ENCODE measurements at regions of chr5 and their contacts with region 1.

Region 1: GRCh38 chr5:57173185-57174127 is at the start of gene GPBP1:
- DNase-seq: peak; percentile 98 to 99
- H3K4me3 ChIP-seq: peak within 1 kb of the TSS; percentile 98
- H3K4me3 Mint-ChIP-seq: peak within 1 kb of the TSS; percentile 97
- H3K27ac Mint-ChIP-seq: peak within 1 kb of the TSS; percentile 99
- H3K4me1 ChIP-seq: peaks cover 8% of the 10 kb centered on the region; the same call in 1 of the 2 replicates
- H3K4me1 Mint-ChIP-seq: no peaks in the 10 kb centered on the region
- H3K27me3 ChIP-seq: no peaks in the 10 kb centered on the region
- H3K27me3 Mint-ChIP-seq: no peaks in the 10 kb centered on the region
- CTCF ChIP-seq: no peak
- total RNA-seq, gene GPBP1: 100 and 117 TPM in 2 replicates

Region 2: DNA sequence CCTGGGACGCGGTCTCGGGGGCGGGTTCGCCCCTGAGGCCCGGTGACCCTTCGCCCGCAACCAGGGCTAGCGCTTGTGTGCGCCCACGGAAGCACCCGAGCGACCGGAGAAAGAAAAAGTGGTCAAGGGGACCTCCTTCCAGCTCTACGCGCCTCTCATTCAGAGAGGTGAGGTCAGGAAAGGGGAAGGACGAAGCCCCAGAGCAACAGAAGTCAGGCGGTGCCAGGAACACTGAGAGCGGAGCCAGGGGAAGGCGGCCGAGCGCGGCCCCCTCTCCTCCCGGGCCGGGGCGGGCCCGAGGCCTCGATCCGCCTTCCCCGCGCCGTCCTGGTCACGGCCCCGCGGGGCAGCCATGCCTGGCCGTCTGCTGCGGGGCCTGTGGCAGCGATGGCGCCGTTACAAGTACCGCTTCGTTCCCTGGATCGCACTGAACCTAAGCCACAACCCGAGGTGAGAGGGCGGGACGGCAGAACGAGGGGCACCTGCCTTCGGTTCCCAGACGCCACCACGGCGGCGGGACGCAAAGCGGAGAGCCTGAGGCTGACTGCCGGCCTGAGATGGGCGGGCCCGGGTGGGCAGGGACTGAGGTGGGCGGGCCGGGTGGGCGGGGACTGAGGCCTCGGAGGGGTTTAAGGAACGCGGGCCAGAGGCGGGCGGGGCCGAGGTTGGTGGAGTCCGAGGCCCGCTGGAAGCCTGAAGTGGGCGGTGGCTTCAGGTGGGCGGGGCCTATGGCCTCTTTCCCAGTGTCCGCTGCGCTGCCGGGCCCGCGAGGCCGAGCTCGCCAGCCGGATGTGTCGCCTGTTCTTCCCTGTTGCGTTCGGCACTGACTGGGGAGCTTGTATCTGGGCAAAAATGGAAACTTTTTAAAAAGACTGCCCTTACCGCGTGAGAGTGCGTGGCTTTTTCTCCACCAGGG is 263.9 kb before region 1 on chr5 and contains the start of gene SETD9:
- CTCF ChIA-PET with region 1: no interaction called
- POLR2A ChIA-PET with region 1: interaction called, 22 read pairs
- intact Hi-C with region 1: loop called (anchors 1 kb)
- DNase-seq: peak; percentile 97 to 99
- H3K4me3 ChIP-seq: peak within 1 kb of the TSS; percentile 85
- H3K4me3 Mint-ChIP-seq: peak within 1 kb of the TSS; percentile 96
- H3K27ac Mint-ChIP-seq: peak within 1 kb of the TSS; percentile 94
- H3K4me1 ChIP-seq: no peaks in the 10 kb centered on the region
- H3K4me1 Mint-ChIP-seq: no peaks in the 10 kb centered on the region
- H3K27me3 ChIP-seq: no peaks in the 10 kb centered on the region
- H3K27me3 Mint-ChIP-seq: no peaks in the 10 kb centered on the region
- CTCF ChIP-seq: no peak
- total RNA-seq, gene SETD9: 10.5 and 13.1 TPM in 2 replicates

Region 3: DNA sequence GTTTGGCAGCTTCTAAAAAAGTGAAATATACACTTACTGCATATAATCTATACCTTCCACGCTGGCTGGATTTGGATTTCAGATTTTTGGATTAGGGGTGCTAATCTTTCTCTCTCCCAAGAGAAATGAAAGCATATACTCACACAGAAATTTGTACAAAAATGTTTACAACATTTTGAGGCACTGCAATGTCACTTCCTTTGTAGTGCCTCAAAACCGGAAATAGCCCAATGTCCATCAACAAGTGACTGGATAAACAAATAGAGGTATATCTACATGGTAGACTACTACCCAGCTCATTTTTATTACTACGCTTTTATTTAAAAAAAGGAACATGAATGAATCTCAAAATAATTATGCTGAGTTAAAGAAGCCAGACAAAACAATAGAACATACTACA is 147.5 kb before region 1 on chr5:
- CTCF ChIA-PET with region 1: no interaction called
- POLR2A ChIA-PET with region 1: no interaction called
- intact Hi-C with region 1: no loop called
- DNase-seq: no peak
- H3K4me3 ChIP-seq: no peak overlapping the region
- H3K4me3 Mint-ChIP-seq: no peak overlapping the region
- H3K27ac Mint-ChIP-seq: no peak overlapping the region
- H3K4me1 ChIP-seq: no peaks in the 10 kb centered on the region; the same call in 1 of the 2 replicates
- H3K4me1 Mint-ChIP-seq: no peaks in the 10 kb centered on the region
- H3K27me3 ChIP-seq: no peaks in the 10 kb centered on the region
- H3K27me3 Mint-ChIP-seq: no peaks in the 10 kb centered on the region
- CTCF ChIP-seq: no peak

Region 4: DNA sequence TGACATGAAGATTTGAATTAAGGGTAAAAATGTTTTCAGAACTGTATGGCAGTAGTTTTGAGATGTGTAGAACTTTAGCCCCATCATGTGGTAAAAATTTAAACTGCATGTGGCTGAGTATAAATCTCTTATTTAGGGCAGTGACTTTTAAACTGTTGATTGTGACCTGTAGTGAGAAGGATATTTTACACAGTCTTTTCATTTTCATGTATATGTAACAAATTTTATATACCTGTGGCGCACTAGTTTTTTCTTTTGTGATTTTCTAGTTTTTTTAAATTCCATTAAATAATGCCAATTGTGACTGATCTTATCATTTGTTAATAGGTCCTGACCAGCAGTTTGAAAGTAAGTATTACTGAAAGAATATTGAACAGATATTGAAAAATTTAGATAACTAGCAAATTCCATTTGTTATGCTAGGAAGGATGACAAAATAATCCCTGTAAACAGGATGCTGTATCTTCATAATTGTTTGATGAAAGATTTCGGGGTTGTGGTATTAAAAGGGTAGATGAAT is 47.7 kb after region 1 on chr5:
- CTCF ChIA-PET with region 1: no interaction called
- POLR2A ChIA-PET with region 1: no interaction called
- intact Hi-C with region 1: loop called (anchors 2 kb)
- DNase-seq: peak in 1 of 2 experiments; percentile 69
- H3K4me3 ChIP-seq: no peak overlapping the region
- H3K4me3 Mint-ChIP-seq: no peak overlapping the region
- H3K27ac Mint-ChIP-seq: no peak overlapping the region
- H3K4me1 ChIP-seq: peaks cover 6% of the 10 kb centered on the region; the same call in 1 of the 2 replicates
- H3K4me1 Mint-ChIP-seq: no peaks in the 10 kb centered on the region
- H3K27me3 ChIP-seq: no peaks in the 10 kb centered on the region
- H3K27me3 Mint-ChIP-seq: no peaks in the 10 kb centered on the region
- CTCF ChIP-seq: peak; percentile 66 to 84

Measured in Caco-2 (cell line).